CD4-positive, alpha-beta T cell (primary cell): ENCODE measurements at regions of chr3 and their contacts with region 1.

Region 1: DNA sequence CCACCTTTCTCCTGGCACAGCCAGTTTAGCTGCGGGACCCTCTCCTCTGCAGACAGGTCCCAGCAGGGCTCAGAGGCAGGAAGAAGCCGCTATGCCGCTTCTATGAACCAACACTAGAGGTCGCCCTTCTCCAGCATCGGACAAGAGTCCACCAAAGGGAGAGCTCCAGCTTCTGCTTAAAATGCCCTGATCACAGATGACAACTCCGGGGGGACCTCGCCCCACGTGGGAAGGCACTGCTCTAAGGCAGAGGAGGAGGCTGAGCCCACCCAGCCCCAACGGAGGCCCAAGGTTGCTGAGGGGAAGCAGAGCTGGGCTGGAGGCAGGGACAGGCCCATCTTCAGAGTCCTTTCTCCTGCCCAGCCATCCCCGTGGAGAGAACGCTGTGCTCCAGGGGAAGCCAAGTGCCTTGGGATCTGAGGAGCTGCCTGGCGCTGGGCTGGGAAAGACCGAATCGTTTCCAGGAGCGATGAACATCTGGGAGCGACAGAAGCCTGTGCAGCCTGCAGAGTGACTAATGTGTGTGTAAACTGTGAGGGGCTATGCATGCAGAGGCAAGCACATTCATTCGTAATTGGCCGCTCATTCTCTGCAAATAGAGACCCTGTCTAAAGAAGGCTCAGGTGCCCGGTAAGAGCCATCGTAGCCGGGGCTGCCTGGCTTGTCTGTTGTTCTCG is 43.5 kb upstream of the BDH1 start:
- DNase-seq: peak; percentile 62 to 88 (median 70)
- ATAC-seq: peak; percentile 98
- H3K4me3 ChIP-seq: no peak overlapping the region
- H3K4me3 Mint-ChIP-seq: no peak overlapping the region
- H3K27ac ChIP-seq: no peak overlapping the region
- H3K27ac Mint-ChIP-seq: no peak overlapping the region
- H3K4me1 ChIP-seq: peaks cover 7% of the 10 kb centered on the region
- H3K4me1 Mint-ChIP-seq: peaks cover 6% of the 10 kb centered on the region
- H3K27me3 ChIP-seq: no peaks in the 10 kb centered on the region
- H3K27me3 Mint-ChIP-seq: no peaks in the 10 kb centered on the region
- CTCF ChIP-seq: peak; percentile 90

Region 2: DNA sequence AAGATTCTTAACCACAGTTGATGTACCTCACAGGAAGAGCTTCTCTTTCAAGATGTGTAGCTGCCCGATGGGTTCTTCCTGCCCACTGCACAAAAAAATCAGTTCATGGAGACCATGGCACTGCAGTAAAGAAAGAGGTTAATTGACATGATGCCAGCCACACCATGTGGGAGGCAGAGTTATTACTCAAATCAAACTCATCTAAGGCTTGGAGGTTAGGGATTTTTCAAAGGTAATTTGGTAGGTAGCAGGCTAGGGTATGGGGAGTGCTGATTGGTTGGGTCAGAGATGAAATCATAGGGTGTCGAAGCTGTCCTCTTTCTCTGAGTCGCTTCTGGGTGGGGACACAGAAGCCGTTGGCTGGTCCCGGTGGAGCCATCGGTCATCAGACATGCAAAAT is 14.0 kb after region 1 on chr3:
- CTCF ChIA-PET with region 1: interaction called, 17 read pairs
- POLR2A ChIA-PET with region 1: interaction called, 4 read pairs
- intact Hi-C with region 1: no loop called
- DNase-seq: peak in 11 of 14 experiments; percentile 7 to 84 (median 35)
- ATAC-seq: peak; percentile 94
- H3K4me3 ChIP-seq: no peak overlapping the region
- H3K4me3 Mint-ChIP-seq: peak overlapping the region; percentile 8
- H3K27ac ChIP-seq: peak overlapping the region; percentile 54 to 56
- H3K27ac Mint-ChIP-seq: peak overlapping the region; percentile 67
- H3K4me1 ChIP-seq: peaks cover 18% of the 10 kb centered on the region
- H3K4me1 Mint-ChIP-seq: peaks cover 27% of the 10 kb centered on the region
- H3K27me3 ChIP-seq: no peaks in the 10 kb centered on the region
- H3K27me3 Mint-ChIP-seq: no peaks in the 10 kb centered on the region
- CTCF ChIP-seq: no peak

Region 3: DNA sequence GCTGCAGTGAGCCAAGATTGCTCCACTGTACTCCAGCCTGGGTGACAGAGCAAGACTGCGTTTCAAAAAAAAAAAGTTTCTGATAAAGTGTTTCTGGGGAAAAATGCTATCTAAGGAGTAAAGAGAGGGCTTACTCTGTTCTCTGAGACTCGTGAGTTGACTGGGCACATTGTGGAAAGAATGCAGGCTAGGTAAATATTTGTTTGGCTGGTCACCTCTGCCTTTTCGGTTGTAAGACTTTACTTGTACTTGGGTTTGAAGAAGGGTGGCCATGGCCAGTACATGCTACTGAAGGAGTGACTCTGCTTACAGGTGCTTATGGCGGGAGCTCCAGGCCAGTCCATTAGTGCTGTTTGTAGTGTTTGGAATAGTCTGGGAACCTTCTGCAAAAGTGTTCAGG is 68.8 kb after region 1 on chr3:
- CTCF ChIA-PET with region 1: interaction called, 6 read pairs
- POLR2A ChIA-PET with region 1: no interaction called
- intact Hi-C with region 1: loop called (anchors 2 to 5 kb)
- DNase-seq: no peak
- ATAC-seq: no peak
- H3K4me3 ChIP-seq: no peak overlapping the region
- H3K4me3 Mint-ChIP-seq: no peak overlapping the region
- H3K27ac ChIP-seq: no peak overlapping the region
- H3K27ac Mint-ChIP-seq: no peak overlapping the region
- H3K4me1 ChIP-seq: peaks cover 6% of the 10 kb centered on the region
- H3K4me1 Mint-ChIP-seq: no peaks in the 10 kb centered on the region
- H3K27me3 ChIP-seq: no peaks in the 10 kb centered on the region
- H3K27me3 Mint-ChIP-seq: no peaks in the 10 kb centered on the region
- CTCF ChIP-seq: no peak

Region 4: GRCh38 chr3:197753263-197753662 is 154.0 kb after region 1 on chr3:
- CTCF ChIA-PET with region 1: no interaction called
- POLR2A ChIA-PET with region 1: no interaction called
- intact Hi-C with region 1: no loop called
- DNase-seq: peak in 1 of 14 experiments; percentile 25
- ATAC-seq: no peak
- H3K4me3 ChIP-seq: no peak overlapping the region
- H3K4me3 Mint-ChIP-seq: peak overlapping the region; percentile 82
- H3K27ac ChIP-seq: no peak overlapping the region
- H3K27ac Mint-ChIP-seq: peak overlapping the region; percentile 87
- H3K4me1 ChIP-seq: peaks cover 20% of the 10 kb centered on the region
- H3K4me1 Mint-ChIP-seq: peaks cover 68% of the 10 kb centered on the region
- H3K27me3 ChIP-seq: no peaks in the 10 kb centered on the region
- H3K27me3 Mint-ChIP-seq: no peaks in the 10 kb centered on the region
- CTCF ChIP-seq: no peak